Gastrocnemius medialis (tissue), 4 donors: ENCODE measurements at regions of chr19 and their contacts with region 1.

Region 1: GRCh38 chr19:4732680-4733114 is 9.1 kb upstream of the DPP9 start:
- DNase-seq: peak in 1 of 2 donors; percentile 37
- ATAC-seq: peak; percentile 90 to 93
- H3K4me3 ChIP-seq: no peak overlapping the region
- H3K27ac ChIP-seq: no peak overlapping the region
- H3K4me1 ChIP-seq: no peaks in the 10 kb centered on the region
- H3K27me3 ChIP-seq: no peaks in the 10 kb centered on the region
- CTCF ChIP-seq: peak; percentile 43 to 83 (median 79)
- POLR2A ChIP-seq: no peak

Region 2: DNA sequence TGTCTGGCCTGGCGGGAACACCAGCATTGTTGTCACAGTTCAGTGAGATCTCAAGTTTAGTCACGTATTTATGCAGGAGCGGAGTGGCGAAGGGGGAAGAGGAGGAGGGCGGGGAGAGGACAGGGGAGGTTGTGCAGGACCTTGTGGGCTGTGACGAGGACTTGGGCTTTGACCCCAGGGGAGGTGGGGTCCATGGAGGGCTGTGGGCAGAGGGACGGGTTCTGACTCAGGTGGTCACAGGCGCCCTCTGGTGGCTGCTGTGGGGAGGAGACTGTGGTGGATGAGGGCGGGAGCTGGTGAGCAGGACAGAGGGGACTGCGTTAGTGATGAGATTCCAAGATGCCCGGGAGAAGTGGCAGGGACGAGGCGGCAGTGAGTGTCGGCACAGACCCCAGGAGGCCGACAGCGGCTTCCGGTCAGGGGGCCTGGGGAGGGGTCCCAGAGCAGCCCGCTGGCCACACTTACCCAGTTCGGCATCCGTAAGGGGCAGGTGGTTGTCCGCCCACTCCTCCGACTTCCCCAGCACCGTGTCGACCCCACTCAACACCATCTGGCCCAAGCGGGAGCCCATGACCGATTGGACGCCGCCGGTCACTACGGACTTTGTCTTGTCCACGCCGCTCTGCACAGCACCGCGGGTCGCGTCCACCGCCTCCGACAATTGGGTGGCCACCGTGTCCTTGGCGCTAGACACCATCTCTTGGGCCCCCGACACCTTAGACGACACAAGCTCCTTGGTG is 119.0 kb after region 1 on chr19:
- in situ Hi-C with region 1: no loop called
- intact Hi-C with region 1: loop called (anchors 5 kb)
- DNase-seq: peak in 1 of 2 donors; percentile 75
- ATAC-seq: peak; percentile 61 to 87
- H3K4me3 ChIP-seq: no peak overlapping the region
- H3K27ac ChIP-seq: peak overlapping the region in 2 of 4 donors; percentile 12 to 16
- H3K4me1 ChIP-seq: no peaks in the 10 kb centered on the region
- H3K27me3 ChIP-seq: no peaks in the 10 kb centered on the region
- CTCF ChIP-seq: peak; percentile 83 to 97 (median 95)
- POLR2A ChIP-seq: no peak